HCT116 (cell line): ENCODE measurements at regions of chr7 and their contacts with region 1.

Region 1: DNA sequence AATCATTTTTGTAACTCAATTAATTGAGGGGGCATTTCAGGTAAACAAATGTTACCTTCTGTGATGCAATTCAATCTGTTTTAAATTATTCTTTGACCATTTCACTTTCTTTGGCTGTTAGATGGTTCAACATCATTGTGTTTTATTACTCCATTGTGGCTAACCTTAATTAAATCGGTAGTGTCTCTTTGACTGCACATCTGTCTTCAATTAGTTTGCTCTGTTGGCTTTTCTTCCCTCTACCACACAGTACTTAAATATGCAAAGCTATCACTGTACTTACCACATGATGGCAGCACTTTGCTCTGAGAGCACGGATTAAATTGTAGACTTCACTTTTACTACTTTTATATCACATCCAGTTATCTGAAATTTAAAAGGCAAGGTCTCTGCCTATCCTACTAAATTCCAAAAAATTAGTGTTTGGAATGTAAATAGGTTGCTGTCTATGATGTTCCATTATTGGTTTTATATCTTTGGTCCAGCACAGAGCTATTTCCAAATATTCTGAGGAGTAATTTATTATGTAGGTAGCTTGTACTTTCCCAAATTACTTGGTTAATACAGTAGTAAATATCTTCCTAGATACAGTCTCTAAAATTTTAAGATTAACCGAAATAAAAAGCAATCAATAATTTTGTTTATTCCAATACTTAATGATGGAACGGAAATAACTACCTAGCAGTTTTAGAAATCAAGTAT is 352.0 kb downstream of the PCLO start:
- DNase-seq: peak; percentile 45
- ATAC-seq: peak; percentile 89
- H3K4me3 ChIP-seq: no peak overlapping the region
- H3K27ac ChIP-seq: no peak overlapping the region
- H3K4me1 ChIP-seq: peaks cover 0 to 3% of the 10 kb centered on the region in 2 experiments; a peak in 2 of 4 replicates
- H3K27me3 ChIP-seq: no peaks in the 10 kb centered on the region
- CTCF ChIP-seq: peak; percentile 48 to 76 (median 64); a peak in 5 of 6 replicates
- POLR2A ChIP-seq: no peak
- RAD21 ChIP-seq: peak; percentile 66

Region 2: DNA sequence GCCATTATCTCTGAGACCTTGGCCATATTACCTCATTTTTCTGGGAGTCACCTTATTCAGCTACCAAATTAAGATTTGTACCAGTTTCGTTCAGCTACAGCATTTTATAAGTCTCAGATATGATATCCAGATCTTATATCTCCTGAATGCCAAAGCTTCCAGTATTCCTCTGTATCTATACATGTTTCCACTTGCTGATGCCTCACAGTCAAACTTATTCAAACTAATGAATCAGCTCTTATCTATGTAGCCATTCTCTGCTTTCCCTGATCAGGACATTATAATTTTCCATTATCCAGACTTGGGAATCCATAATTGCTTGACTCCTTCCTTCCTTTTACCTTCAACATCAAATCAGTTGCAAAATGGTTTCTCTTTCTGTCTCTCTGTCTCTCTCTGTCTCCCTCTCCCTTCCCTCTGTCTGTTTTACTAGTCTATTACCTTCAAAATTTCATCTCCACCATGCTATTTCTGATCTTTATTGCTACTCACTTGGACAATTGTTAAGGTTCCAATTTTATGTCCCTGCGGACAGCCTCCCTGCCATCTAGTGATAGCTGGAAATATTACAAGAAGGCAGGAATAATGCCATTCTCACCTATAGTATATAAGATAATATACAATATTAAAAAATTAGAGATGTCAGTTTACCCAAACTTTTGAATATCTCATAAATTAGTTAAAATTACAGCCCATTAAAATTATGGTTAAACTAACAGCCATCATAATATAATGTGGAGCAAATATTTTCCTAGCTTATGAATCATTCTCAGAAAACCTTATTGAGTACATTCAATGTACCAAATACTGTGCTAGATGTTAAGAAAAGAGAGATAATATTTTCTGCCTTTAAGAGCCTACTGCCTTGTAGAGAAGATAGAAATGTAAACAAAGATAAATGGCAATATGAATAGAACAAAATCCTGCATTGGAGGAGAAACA is 262.1 kb after region 1 on chr7:
- CTCF ChIA-PET with region 1: interaction called, 12 read pairs
- POLR2A ChIA-PET with region 1: no interaction called
- RAD21 ChIA-PET with region 1: interaction called in 1 of 2 experiments, 4 read pairs
- intact Hi-C with region 1: loop called (anchors 2 kb)
- DNase-seq: no peak
- ATAC-seq: peak; percentile 66
- H3K4me3 ChIP-seq: no peak overlapping the region
- H3K27ac ChIP-seq: no peak overlapping the region
- H3K4me1 ChIP-seq: no peaks in the 10 kb centered on the region
- H3K27me3 ChIP-seq: no peaks in the 10 kb centered on the region
- CTCF ChIP-seq: peak; percentile 37 to 43 (median 37); a peak in 4 of 6 replicates
- POLR2A ChIP-seq: no peak
- RAD21 ChIP-seq: peak; percentile 56; the same call in 1 of the 2 replicates

Region 3: DNA sequence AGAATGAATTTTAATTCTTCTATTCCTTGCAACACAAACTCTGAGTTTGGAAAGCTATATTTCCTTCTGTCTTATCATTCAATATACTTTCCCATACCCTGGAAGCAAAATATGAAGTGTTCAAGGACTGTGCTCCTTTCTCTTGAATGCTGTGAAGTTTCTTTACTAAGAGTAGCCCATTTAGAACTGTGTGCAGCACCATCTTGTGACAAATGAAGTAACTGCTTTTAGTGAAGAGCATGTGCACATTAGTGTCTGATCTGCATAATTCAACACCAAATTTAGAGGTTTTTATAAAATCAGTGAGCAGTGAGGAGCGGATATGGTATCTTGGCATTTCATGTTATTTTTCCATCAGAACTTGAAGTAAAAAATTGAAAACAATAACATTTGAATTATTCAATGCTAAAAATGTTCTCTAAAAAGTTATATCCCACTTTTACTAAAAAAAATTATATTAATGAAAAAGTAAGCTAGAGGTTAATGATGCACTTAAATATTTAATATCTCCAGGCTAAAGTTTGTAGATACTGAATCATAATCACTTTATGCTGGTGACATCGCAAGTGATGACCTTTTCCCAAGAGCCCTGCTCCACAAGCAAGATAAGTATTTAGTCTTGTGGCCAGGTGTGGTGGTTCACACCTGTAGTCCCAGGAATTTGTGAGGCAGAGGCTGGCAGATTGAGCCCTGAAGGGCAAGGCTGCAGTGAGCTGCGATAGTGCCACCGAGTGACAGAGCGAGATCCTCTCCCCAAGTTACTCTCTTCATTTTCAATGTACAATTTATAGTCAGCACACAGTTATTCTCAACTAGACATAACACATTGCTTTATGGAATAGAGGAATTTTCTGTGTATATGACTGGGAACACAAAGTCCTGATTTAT is 460.7 kb after region 1 on chr7:
- CTCF ChIA-PET with region 1: interaction called, 5 read pairs
- POLR2A ChIA-PET with region 1: no interaction called
- RAD21 ChIA-PET with region 1: no interaction called
- intact Hi-C with region 1: loop called (anchors 1 kb)
- DNase-seq: peak; percentile 26
- ATAC-seq: peak; percentile 85
- H3K4me3 ChIP-seq: no peak overlapping the region
- H3K27ac ChIP-seq: no peak overlapping the region
- H3K4me1 ChIP-seq: no peaks in the 10 kb centered on the region
- H3K27me3 ChIP-seq: no peaks in the 10 kb centered on the region
- CTCF ChIP-seq: peak; percentile 41 to 61 (median 51); a peak in 4 of 6 replicates
- POLR2A ChIP-seq: no peak
- RAD21 ChIP-seq: peak; percentile 73